CD4-positive, alpha-beta memory T cell (primary cell): ENCODE measurements at regions of chr9 and their contacts with region 1.

Region 1: GRCh38 chr9:131668439-131669268 is 71.2 kb downstream of the RAPGEF1 start:
- DNase-seq: peak; percentile 74 to 94 (median 77)
- H3K4me3 ChIP-seq: peak overlapping the region in 1 of 2 donors; percentile 46
- H3K4me3 Mint-ChIP-seq: peak overlapping the region; percentile 73 to 85 (median 80)
- H3K27ac ChIP-seq: peak overlapping the region; percentile 89
- H3K27ac Mint-ChIP-seq: peak overlapping the region; percentile 94 to 100 (median 100)
- H3K4me1 ChIP-seq: peaks cover 97% of the 10 kb centered on the region
- H3K4me1 Mint-ChIP-seq: peaks cover 71 to 100% (median 91%) of the 10 kb centered on the region in 4 donors
- H3K27me3 ChIP-seq: no peaks in the 10 kb centered on the region
- H3K27me3 Mint-ChIP-seq: no peaks in the 10 kb centered on the region

Region 2: GRCh38 chr9:131590908-131591844 is 77.5 kb before region 1 on chr9:
- CTCF ChIA-PET with region 1: interaction called, 9 read pairs
- POLR2A ChIA-PET with region 1: interaction called, 7 read pairs
- intact Hi-C with region 1: loop called (anchors 5 kb)
- DNase-seq: peak; percentile 68 to 74 (median 73)
- H3K4me3 ChIP-seq: no peak overlapping the region
- H3K4me3 Mint-ChIP-seq: peak overlapping the region in 6 of 8 donors; percentile 20 to 73 (median 46)
- H3K27ac ChIP-seq: no peak overlapping the region
- H3K27ac Mint-ChIP-seq: peak overlapping the region; percentile 77 to 94 (median 85)
- H3K4me1 ChIP-seq: peaks cover 25% of the 10 kb centered on the region
- H3K4me1 Mint-ChIP-seq: peaks cover 22 to 48% (median 34%) of the 10 kb centered on the region in 4 donors
- H3K27me3 ChIP-seq: no peaks in the 10 kb centered on the region
- H3K27me3 Mint-ChIP-seq: no peaks in the 10 kb centered on the region

Region 3: GRCh38 chr9:131603199-131603598 is 65.5 kb before region 1 on chr9:
- CTCF ChIA-PET with region 1: no interaction called
- POLR2A ChIA-PET with region 1: no interaction called
- intact Hi-C with region 1: no loop called
- DNase-seq: no peak
- H3K4me3 ChIP-seq: no peak overlapping the region
- H3K4me3 Mint-ChIP-seq: no peak overlapping the region
- H3K27ac ChIP-seq: no peak overlapping the region
- H3K27ac Mint-ChIP-seq: peak overlapping the region in 4 of 7 donors; percentile 21 to 78 (median 66)
- H3K4me1 ChIP-seq: no peaks in the 10 kb centered on the region
- H3K4me1 Mint-ChIP-seq: peaks cover 3 to 9% (median 7%) of the 10 kb centered on the region in 4 donors
- H3K27me3 ChIP-seq: no peaks in the 10 kb centered on the region
- H3K27me3 Mint-ChIP-seq: no peaks in the 10 kb centered on the region

Region 4: GRCh38 chr9:131635285-131635684 is 33.4 kb before region 1 on chr9:
- CTCF ChIA-PET with region 1: interaction called, 8 read pairs
- POLR2A ChIA-PET with region 1: interaction called, 23 read pairs
- intact Hi-C with region 1: loop called (anchors 2 kb)
- DNase-seq: peak; percentile 74 to 94 (median 80)
- H3K4me3 ChIP-seq: no peak overlapping the region
- H3K4me3 Mint-ChIP-seq: peak overlapping the region in 5 of 8 donors; percentile 13 to 60 (median 26)
- H3K27ac ChIP-seq: peak overlapping the region; percentile 67
- H3K27ac Mint-ChIP-seq: peak overlapping the region; percentile 92 to 97 (median 96)
- H3K4me1 ChIP-seq: peaks cover 20% of the 10 kb centered on the region
- H3K4me1 Mint-ChIP-seq: peaks cover 23 to 50% (median 38%) of the 10 kb centered on the region in 4 donors
- H3K27me3 ChIP-seq: no peaks in the 10 kb centered on the region
- H3K27me3 Mint-ChIP-seq: no peaks in the 10 kb centered on the region

Region 5: DNA sequence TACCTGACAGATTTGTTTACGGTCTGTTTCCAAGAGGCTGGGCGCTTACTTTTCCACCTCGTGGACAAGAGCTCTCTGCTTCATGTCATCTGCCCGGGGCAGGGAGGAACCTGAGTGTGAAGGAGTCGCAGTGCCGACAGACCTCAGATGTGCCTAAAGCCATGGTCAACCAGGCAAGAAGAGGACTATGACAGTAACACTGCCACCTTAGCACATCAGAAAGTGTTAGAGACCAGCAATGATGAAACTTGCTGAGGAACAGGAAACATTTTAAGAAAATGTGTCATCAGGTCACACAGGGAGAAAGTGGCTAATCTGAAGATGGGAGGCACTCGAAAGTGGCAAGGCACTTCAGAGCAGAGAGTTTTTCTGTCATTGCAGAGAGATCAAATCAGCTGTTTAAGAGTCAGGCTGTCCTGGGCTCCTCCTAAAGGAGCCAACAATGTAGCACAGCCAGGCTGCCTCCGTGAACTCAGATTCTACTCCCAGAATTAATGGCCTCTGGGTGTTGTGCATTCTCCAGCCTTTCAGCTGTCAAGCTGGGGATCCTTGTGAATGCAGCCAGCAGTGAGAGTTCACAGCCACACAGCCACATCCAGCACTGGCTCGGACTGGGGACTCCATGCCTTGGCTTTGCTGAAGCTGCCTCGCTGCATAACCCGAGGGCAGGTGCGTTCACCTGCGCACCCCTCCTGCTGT is 23.4 kb before region 1 on chr9:
- CTCF ChIA-PET with region 1: no interaction called
- POLR2A ChIA-PET with region 1: interaction called, 18 read pairs
- intact Hi-C with region 1: no loop called
- DNase-seq: no peak
- H3K4me3 ChIP-seq: no peak overlapping the region
- H3K4me3 Mint-ChIP-seq: peak overlapping the region in 5 of 8 donors; percentile 4 to 71 (median 45)
- H3K27ac ChIP-seq: peak overlapping the region; percentile 28
- H3K27ac Mint-ChIP-seq: peak overlapping the region; percentile 75 to 94 (median 86)
- H3K4me1 ChIP-seq: peaks cover 38% of the 10 kb centered on the region
- H3K4me1 Mint-ChIP-seq: peaks cover 26 to 73% (median 44%) of the 10 kb centered on the region in 4 donors
- H3K27me3 ChIP-seq: no peaks in the 10 kb centered on the region
- H3K27me3 Mint-ChIP-seq: no peaks in the 10 kb centered on the region

Region 6: GRCh38 chr9:131656356-131657036 is 12.2 kb before region 1 on chr9:
- CTCF ChIA-PET with region 1: interaction called, 3 read pairs
- POLR2A ChIA-PET with region 1: interaction called, 291 read pairs
- intact Hi-C with region 1: loop called (anchors 1 kb)
- DNase-seq: peak; percentile 73 to 93 (median 76)
- H3K4me3 ChIP-seq: peak overlapping the region in 1 of 2 donors; percentile 4
- H3K4me3 Mint-ChIP-seq: peak overlapping the region; percentile 50 to 86 (median 72)
- H3K27ac ChIP-seq: peak overlapping the region; percentile 70
- H3K27ac Mint-ChIP-seq: peak overlapping the region; percentile 92 to 99 (median 97)
- H3K4me1 ChIP-seq: peaks cover 81% of the 10 kb centered on the region
- H3K4me1 Mint-ChIP-seq: peaks cover 53 to 87% (median 73%) of the 10 kb centered on the region in 4 donors
- H3K27me3 ChIP-seq: no peaks in the 10 kb centered on the region
- H3K27me3 Mint-ChIP-seq: no peaks in the 10 kb centered on the region

Region 7: GRCh38 chr9:131709771-131710454 is 41.3 kb after region 1 on chr9:
- CTCF ChIA-PET with region 1: interaction called, 3 read pairs
- POLR2A ChIA-PET with region 1: interaction called, 21 read pairs
- intact Hi-C with region 1: no loop called
- DNase-seq: peak; percentile 77 to 92 (median 84)
- H3K4me3 ChIP-seq: peak overlapping the region in 1 of 2 donors; percentile 8
- H3K4me3 Mint-ChIP-seq: peak overlapping the region; percentile 73 to 82 (median 78)
- H3K27ac ChIP-seq: peak overlapping the region; percentile 81
- H3K27ac Mint-ChIP-seq: peak overlapping the region; percentile 97 to 100 (median 99)
- H3K4me1 ChIP-seq: peaks cover 84% of the 10 kb centered on the region
- H3K4me1 Mint-ChIP-seq: peaks cover 53 to 94% (median 77%) of the 10 kb centered on the region in 4 donors
- H3K27me3 ChIP-seq: no peaks in the 10 kb centered on the region
- H3K27me3 Mint-ChIP-seq: no peaks in the 10 kb centered on the region

Region 8: GRCh38 chr9:131826968-131827525 is 158.4 kb after region 1 on chr9:
- CTCF ChIA-PET with region 1: no interaction called
- POLR2A ChIA-PET with region 1: no interaction called
- intact Hi-C with region 1: no loop called
- DNase-seq: no peak
- H3K4me3 ChIP-seq: no peak overlapping the region
- H3K4me3 Mint-ChIP-seq: no peak overlapping the region
- H3K27ac ChIP-seq: no peak overlapping the region
- H3K27ac Mint-ChIP-seq: no peak overlapping the region
- H3K4me1 ChIP-seq: no peaks in the 10 kb centered on the region
- H3K4me1 Mint-ChIP-seq: peaks cover 0 to 2% (median under 1%) of the 10 kb centered on the region in 4 donors
- H3K27me3 ChIP-seq: no peaks in the 10 kb centered on the region
- H3K27me3 Mint-ChIP-seq: peaks cover 19 to 20% of the 10 kb centered on the region in 2 donors